Activated CD8-positive, alpha-beta T cell treated with anti-CD3 and anti-CD28 coated beads, Interleukin-2, amount 10 ng/mL, durations not matched to agents 7 days and 5 days (primary cell): ENCODE measurements at regions of chr2 and their contacts with region 1.

Region 1: DNA sequence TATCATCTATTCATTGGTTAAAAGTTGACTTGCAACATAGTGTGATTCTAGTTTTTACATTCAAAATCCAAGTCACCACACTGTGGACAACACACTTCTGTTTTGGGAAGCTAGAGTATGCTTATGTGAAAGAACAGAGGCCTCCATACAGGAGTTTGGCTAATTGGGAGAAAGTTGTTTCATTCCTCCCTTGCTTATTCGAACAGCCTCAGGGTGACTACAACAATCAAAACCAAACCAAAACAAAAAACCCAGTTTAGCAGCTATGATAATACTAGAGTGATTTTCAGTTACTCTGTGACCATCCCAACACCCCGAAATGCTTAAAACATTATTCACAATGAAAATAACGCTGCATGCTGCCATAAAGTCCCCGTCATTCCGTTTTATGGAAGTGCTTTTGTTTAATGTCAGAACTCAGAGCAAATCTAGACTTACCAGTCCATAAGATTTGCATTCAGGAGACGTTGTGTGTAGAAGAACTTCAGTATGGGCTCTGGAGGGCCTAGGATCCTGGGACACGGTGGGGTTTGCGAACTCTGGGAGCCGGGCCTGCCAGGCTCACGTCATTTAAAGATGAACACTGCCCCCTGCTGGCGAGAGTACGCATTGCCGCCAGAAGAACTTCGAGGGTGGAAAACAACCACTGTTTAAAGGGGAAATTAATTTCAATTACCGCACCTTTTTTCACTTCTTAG is 111.4 kb downstream of the FTCDNL1 start:
- DNase-seq: peak; percentile 69
- ATAC-seq: no peak
- H3K4me3 Mint-ChIP-seq: no peak overlapping the region
- H3K27ac Mint-ChIP-seq: no peak overlapping the region
- H3K4me1 Mint-ChIP-seq: no peaks in the 10 kb centered on the region
- H3K27me3 Mint-ChIP-seq: peaks cover 23% of the 10 kb centered on the region

Region 2: GRCh38 chr2:199322151-199322550 is 417.4 kb before region 1 on chr2:
- CTCF ChIA-PET with region 1: no interaction called
- POLR2A ChIA-PET with region 1: no interaction called
- DNase-seq: no peak
- ATAC-seq: no peak
- H3K4me3 Mint-ChIP-seq: no peak overlapping the region
- H3K27ac Mint-ChIP-seq: no peak overlapping the region
- H3K4me1 Mint-ChIP-seq: no peaks in the 10 kb centered on the region
- H3K27me3 Mint-ChIP-seq: no peaks in the 10 kb centered on the region

Region 3: DNA sequence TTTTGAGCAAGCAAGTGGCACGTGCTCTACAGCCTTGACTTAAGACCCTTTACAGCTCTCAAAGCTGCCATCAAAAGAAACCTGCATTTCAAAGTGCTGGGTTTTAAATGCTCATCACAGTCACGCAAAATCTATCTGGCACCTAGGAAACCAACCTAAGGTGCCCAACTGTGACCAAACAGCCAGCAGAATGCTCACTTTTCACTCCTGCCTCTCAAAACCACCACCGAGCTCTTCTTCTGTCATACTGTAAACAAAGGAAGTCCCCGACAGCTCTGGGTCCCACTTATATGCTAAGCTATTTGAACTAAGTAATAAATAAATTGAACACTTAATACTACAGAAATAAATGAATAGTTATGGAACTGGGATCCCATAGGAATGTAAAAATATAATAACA is 315.4 kb before region 1 on chr2:
- CTCF ChIA-PET with region 1: no interaction called
- POLR2A ChIA-PET with region 1: no interaction called
- DNase-seq: no peak
- ATAC-seq: no peak
- H3K4me3 Mint-ChIP-seq: no peak overlapping the region
- H3K27ac Mint-ChIP-seq: no peak overlapping the region
- H3K4me1 Mint-ChIP-seq: no peaks in the 10 kb centered on the region
- H3K27me3 Mint-ChIP-seq: no peaks in the 10 kb centered on the region

Region 4: GRCh38 chr2:199589308-199589707 is 150.3 kb before region 1 on chr2:
- CTCF ChIA-PET with region 1: no interaction called
- POLR2A ChIA-PET with region 1: no interaction called
- DNase-seq: no peak
- ATAC-seq: no peak
- H3K4me3 Mint-ChIP-seq: no peak overlapping the region
- H3K27ac Mint-ChIP-seq: no peak overlapping the region
- H3K4me1 Mint-ChIP-seq: no peaks in the 10 kb centered on the region
- H3K27me3 Mint-ChIP-seq: peaks cover 5% of the 10 kb centered on the region

Region 5: DNA sequence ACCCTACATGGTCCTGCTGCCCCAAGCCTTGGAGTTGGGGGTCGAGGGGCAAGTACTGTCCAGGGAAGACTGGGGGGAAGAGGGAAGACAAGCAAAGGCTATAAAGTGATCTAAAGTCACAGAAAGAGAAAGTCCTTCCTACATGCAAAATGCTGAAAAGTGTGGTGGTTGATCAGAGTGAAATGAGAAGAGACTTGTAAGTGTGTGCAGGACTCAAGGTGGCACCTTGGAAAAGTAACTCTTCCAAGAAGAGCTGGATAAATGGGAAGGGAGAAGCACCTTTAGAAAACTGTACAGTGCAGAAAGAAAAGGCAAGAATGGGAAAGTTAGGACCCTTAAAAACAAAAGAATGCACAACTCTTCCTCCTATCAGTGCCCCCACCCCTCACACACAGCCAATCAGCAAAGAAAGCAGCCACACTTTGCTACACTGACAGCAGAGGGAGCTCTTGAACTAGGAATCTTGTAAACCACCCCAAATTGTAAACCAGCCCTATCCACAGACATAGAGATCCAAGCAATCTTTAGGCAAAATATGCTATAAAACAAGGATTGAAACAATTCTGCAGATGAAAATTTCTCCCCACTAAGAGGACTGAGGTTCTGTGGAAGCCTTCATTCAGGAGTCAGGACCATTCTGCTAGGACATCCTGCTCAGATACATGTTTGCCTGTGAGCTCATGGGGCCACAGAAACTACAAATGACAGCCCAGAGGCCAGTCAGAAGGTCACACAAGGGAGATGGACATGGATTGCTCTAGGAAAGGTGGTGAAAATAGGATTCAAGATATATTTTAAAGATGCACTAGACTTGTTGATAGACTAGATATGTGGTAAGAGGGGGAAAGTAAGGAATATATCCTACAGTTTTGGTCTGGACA is 35.0 kb before region 1 on chr2:
- CTCF ChIA-PET with region 1: interaction called, 31 read pairs
- POLR2A ChIA-PET with region 1: no interaction called
- DNase-seq: peak; percentile 25
- ATAC-seq: peak; percentile 55
- H3K4me3 Mint-ChIP-seq: no peak overlapping the region
- H3K27ac Mint-ChIP-seq: no peak overlapping the region
- H3K4me1 Mint-ChIP-seq: no peaks in the 10 kb centered on the region
- H3K27me3 Mint-ChIP-seq: peaks cover 6% of the 10 kb centered on the region

Region 6: DNA sequence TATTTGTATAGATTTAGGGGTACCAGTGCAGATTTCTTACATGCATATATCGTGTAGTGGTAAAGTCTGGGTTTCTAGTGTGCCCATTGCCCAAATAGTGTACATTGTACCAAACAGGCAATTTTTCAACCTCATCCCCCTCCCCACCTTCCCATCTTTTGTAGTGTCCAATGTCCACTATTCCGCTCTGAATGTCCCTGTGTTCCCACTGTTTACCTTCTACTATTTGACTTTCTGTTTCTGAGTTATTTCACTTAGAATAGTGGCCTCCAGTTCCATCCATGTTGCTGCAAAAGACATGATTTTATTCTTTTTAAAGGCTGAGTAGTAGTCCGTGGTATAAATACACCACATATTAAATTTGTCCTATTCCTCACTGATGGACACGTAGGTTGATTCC is 21.5 kb before region 1 on chr2:
- CTCF ChIA-PET with region 1: no interaction called
- POLR2A ChIA-PET with region 1: no interaction called
- DNase-seq: no peak
- ATAC-seq: no peak
- H3K4me3 Mint-ChIP-seq: no peak overlapping the region
- H3K27ac Mint-ChIP-seq: no peak overlapping the region
- H3K4me1 Mint-ChIP-seq: no peaks in the 10 kb centered on the region
- H3K27me3 Mint-ChIP-seq: peaks cover 6% of the 10 kb centered on the region

Region 7: DNA sequence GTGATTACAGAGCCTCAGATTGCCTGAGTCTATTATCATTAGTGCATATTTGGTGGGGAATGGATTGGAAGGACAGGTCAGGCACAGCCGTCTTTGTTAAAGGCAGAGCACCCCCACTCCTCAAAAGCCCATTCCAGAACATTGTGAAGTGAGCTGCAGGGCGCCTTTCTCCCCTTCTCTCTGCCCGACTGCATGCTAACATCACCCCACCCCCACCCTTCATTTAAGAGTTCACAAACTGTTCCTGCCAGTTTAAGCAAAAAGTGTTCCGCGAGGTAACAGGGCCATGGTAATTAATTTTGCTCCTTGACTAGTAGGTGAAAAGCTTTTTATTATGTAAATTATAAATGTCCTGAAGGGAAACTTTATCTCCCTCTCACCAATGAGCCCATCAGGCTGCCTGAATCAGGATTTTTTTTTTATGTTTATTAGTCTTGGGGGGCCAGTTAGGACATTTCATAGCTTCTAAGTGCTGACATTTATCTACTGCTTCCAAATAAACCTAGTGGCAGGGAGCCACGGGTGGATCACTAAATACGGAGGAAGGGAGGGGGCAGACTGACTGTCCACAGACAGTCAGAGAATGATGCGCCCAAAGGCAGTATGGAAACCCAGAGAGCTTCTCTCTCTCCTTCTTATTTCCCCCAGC is 12.0 kb after region 1 on chr2:
- CTCF ChIA-PET with region 1: interaction called, 23 read pairs
- POLR2A ChIA-PET with region 1: no interaction called
- DNase-seq: no peak
- ATAC-seq: no peak
- H3K4me3 Mint-ChIP-seq: no peak overlapping the region
- H3K27ac Mint-ChIP-seq: no peak overlapping the region
- H3K4me1 Mint-ChIP-seq: no peaks in the 10 kb centered on the region
- H3K27me3 Mint-ChIP-seq: no peaks in the 10 kb centered on the region